Activated T-helper 2 cell treated with anti-CD3 and anti-CD28 coated beads, Interferon-gamma antibody, Interleukin-2, Interleukin-4, amounts not matched to agents 10 μg/mL and 5 μg/mL and 100 μg/mL, durations not matched to agents 14 hours and 24 hours and 36 hours (primary cell): ENCODE measurements at regions of chr6 and their contacts with region 1.

Region 1: GRCh38 chr6:45677381-45678284 is 299.9 kb upstream of the SUPT3H start:
- DNase-seq: peak; percentile 63
- H3K4me3 Mint-ChIP-seq: peak overlapping the region; percentile 67
- H3K27ac Mint-ChIP-seq: peak overlapping the region; percentile 90
- H3K4me1 Mint-ChIP-seq: peaks cover 35% of the 10 kb centered on the region
- H3K27me3 Mint-ChIP-seq: no peaks in the 10 kb centered on the region

Region 2: GRCh38 chr6:44439270-44440045 is 1238.2 kb before region 1 on chr6:
- intact Hi-C with region 1: no loop called
- DNase-seq: no peak
- H3K4me3 Mint-ChIP-seq: no peak overlapping the region
- H3K27ac Mint-ChIP-seq: no peak overlapping the region
- H3K4me1 Mint-ChIP-seq: peaks cover 5% of the 10 kb centered on the region
- H3K27me3 Mint-ChIP-seq: no peaks in the 10 kb centered on the region

Region 3: GRCh38 chr6:45555981-45556771 is 121.5 kb before region 1 on chr6:
- intact Hi-C with region 1: no loop called
- DNase-seq: no peak
- H3K4me3 Mint-ChIP-seq: no peak overlapping the region
- H3K27ac Mint-ChIP-seq: no peak overlapping the region
- H3K4me1 Mint-ChIP-seq: peaks cover 69% of the 10 kb centered on the region
- H3K27me3 Mint-ChIP-seq: no peaks in the 10 kb centered on the region

Region 4: DNA sequence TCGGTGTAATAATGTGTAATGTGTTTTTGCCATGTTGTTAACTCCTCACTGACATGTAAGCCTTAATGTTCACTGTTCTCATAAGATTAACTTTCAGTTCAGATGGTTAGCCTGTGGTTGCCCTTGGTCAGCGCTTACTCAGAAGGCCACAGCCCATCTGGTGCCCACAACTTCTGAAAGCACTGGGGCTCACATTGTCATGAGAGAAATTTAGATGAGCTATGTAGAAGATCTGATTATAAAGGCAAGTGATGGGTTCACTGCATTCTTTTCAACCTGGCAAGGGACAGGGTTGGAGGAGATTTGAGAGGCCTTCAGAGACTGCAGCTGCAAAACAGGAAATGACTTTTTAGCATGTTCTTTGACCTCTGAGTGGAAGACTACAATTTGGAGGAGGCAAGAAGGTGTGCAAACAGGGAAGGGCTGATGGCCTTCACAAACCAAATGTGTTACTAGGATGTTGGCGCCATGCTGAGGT is 57.6 kb before region 1 on chr6:
- intact Hi-C with region 1: loop called (anchors 2 kb)
- DNase-seq: no peak
- H3K4me3 Mint-ChIP-seq: no peak overlapping the region
- H3K27ac Mint-ChIP-seq: peak overlapping the region; percentile 79
- H3K4me1 Mint-ChIP-seq: peaks cover 57% of the 10 kb centered on the region
- H3K27me3 Mint-ChIP-seq: no peaks in the 10 kb centered on the region

Region 5: GRCh38 chr6:45757443-45758130 is 80.0 kb after region 1 on chr6:
- intact Hi-C with region 1: no loop called
- DNase-seq: no peak
- H3K4me3 Mint-ChIP-seq: no peak overlapping the region
- H3K27ac Mint-ChIP-seq: peak overlapping the region; percentile 30
- H3K4me1 Mint-ChIP-seq: peaks cover 30% of the 10 kb centered on the region
- H3K27me3 Mint-ChIP-seq: no peaks in the 10 kb centered on the region